PC-9 (cell line): ENCODE measurements at regions of chr1 and their contacts with region 1.

Region 1: DNA sequence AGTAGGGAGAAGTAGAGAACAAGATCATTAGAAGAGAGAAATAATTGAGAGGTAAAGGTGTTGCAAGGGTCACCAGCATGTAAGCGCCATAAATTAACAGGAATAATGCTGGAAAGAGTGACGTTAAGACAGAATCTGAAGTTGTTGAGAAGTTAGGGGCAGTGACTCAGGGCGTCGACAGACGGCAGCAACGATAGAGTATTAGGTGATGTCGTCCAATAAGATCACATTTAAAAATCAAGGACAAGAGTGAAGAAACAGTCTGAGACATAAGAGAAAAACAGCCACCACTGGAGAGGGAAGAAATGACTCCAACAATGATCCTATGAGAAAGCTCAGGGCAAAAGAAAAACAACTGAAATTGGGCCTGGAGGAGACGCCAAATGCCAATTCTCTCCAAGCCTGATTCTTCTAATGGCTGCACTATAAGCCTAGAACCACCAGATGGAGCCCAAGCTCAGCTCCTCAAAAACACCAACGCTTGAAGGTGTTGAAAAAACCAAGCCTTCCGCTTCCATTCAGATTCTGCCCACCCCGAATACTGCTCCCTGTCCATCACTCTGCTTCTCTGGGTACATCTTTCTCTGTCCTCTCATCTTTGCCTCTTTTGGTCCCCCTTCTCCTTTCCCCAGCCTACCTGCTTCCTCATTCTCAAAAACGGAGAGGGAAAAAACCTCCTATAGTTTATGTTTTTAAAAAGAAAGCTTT is 70.0 kb downstream of the LUZP1 start:
- DNase-seq: peak; percentile 47 to 55
- H3K4me3 ChIP-seq: no peak overlapping the region
- H3K27ac ChIP-seq: peak overlapping the region; percentile 86
- H3K4me1 ChIP-seq: peaks cover 48% of the 10 kb centered on the region
- H3K27me3 ChIP-seq: no peaks in the 10 kb centered on the region
- CTCF ChIP-seq: peak; percentile 80

Region 2: GRCh38 chr1:23168457-23169194 is 70.0 kb after region 1 on chr1 and contains the start of gene LUZP1:
- CTCF ChIA-PET with region 1: no interaction called
- POLR2A ChIA-PET with region 1: interaction called, 11 read pairs
- intact Hi-C with region 1: loop called (anchors 5 kb)
- DNase-seq: peak; percentile 39 to 80
- H3K4me3 ChIP-seq: peak within 1 kb of the TSS; percentile 75
- H3K27ac ChIP-seq: peak within 1 kb of the TSS; percentile 58
- H3K4me1 ChIP-seq: peaks cover 6% of the 10 kb centered on the region
- H3K27me3 ChIP-seq: no peaks in the 10 kb centered on the region
- CTCF ChIP-seq: no peak
- total RNA-seq, gene LUZP1: 35.0 and 37.6 TPM in 2 replicates

Region 3: GRCh38 chr1:23216771-23217420 is 118.3 kb after region 1 on chr1:
- CTCF ChIA-PET with region 1: interaction called, 10 read pairs
- POLR2A ChIA-PET with region 1: no interaction called
- intact Hi-C with region 1: no loop called
- DNase-seq: peak in 1 of 2 experiments; percentile 50
- H3K4me3 ChIP-seq: peak overlapping the region; percentile 66
- H3K27ac ChIP-seq: no peak overlapping the region
- H3K4me1 ChIP-seq: peaks cover 22% of the 10 kb centered on the region; the same call in 1 of the 2 replicates
- H3K27me3 ChIP-seq: no peaks in the 10 kb centered on the region
- CTCF ChIP-seq: peak; percentile 79

Region 4: DNA sequence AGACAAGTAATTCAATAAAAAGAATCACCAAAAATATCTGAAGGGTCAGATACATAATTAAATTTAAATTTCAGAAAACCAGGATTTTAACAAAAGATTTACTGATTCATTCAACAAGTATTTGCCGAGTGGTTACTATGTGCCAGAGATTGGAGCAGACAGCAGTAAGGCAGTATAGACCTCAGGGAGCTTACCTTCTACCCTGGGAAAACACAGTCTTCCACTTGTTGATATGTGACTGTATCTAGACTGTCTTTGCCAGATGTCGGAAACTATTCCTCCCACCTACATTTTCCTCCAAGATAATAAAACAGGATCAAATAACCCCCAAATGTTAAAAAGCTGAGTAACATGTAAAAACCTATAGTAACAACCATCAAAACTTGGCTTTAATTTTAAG is 239.3 kb after region 1 on chr1:
- CTCF ChIA-PET with region 1: interaction called, 13 read pairs
- POLR2A ChIA-PET with region 1: no interaction called
- intact Hi-C with region 1: no loop called
- DNase-seq: no peak
- H3K4me3 ChIP-seq: no peak overlapping the region
- H3K27ac ChIP-seq: no peak overlapping the region
- H3K4me1 ChIP-seq: peaks cover 32% of the 10 kb centered on the region
- H3K27me3 ChIP-seq: no peaks in the 10 kb centered on the region
- CTCF ChIP-seq: no peak